Lower leg skin (tissue), 4 donors: ENCODE measurements at regions of chr17 and their contacts with region 1.

Region 1: GRCh38 chr17:73071066-73071999 is 21.2 kb downstream of the SLC39A11 start:
- DNase-seq: peak; percentile 56 to 65
- H3K4me3 ChIP-seq: no peak overlapping the region
- CTCF ChIP-seq: no peak
- POLR2A ChIP-seq: no peak

Region 2: GRCh38 chr17:73057196-73057595 is 14.1 kb before region 1 on chr17:
- intact Hi-C with region 1: loop called (anchors 1 kb)
- DNase-seq: no peak
- H3K4me3 ChIP-seq: no peak overlapping the region
- CTCF ChIP-seq: no peak
- POLR2A ChIP-seq: no peak

Region 3: GRCh38 chr17:73132085-73132492 is 60.8 kb after region 1 on chr17:
- intact Hi-C with region 1: no loop called
- DNase-seq: no peak
- H3K4me3 ChIP-seq: no peak overlapping the region
- CTCF ChIP-seq: no peak
- POLR2A ChIP-seq: no peak